ENCODE measurements at regions of chr4 and their contacts with region 1.

Region 1: GRCh38 chr4:58590722-58591121 is 1480.5 kb upstream of the IGFBP7 start:
- DNase-seq: peak; percentile 87
- H3K4me3 Mint-ChIP-seq: no peak overlapping the region
- H3K27ac Mint-ChIP-seq: no peak overlapping the region
- H3K4me1 Mint-ChIP-seq: peaks cover 8% of the 10 kb centered on the region
- H3K27me3 Mint-ChIP-seq: no peaks in the 10 kb centered on the region
- CTCF ChIP-seq: no peak

Region 2: DNA sequence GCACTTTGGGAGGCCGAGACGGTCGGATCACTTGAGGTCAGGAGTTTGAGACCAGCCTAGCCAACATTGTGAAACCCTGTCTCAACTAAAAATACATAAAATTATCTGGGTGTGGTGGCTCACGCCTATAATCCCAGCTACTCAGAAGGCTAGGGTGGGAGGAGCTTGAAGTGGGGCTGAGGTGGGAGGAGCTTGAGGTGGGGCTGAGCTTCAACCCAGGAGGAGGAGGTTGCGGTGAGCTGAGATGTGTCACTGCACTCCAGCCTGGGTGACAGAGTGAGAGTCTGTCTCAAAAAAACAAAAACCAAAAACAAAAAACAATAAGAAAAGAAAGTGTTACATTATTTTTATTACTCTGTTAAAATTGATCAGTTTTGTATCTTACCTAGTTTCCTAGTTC is 316.2 kb before region 1 on chr4:
- CTCF ChIA-PET with region 1: no interaction called
- POLR2A ChIA-PET with region 1: no interaction called
- intact Hi-C with region 1: loop called (anchors 10 kb)
- DNase-seq: no peak
- H3K4me3 Mint-ChIP-seq: no peak overlapping the region
- H3K27ac Mint-ChIP-seq: no peak overlapping the region
- H3K4me1 Mint-ChIP-seq: no peaks in the 10 kb centered on the region
- H3K27me3 Mint-ChIP-seq: no peaks in the 10 kb centered on the region
- CTCF ChIP-seq: no peak

Region 3: DNA sequence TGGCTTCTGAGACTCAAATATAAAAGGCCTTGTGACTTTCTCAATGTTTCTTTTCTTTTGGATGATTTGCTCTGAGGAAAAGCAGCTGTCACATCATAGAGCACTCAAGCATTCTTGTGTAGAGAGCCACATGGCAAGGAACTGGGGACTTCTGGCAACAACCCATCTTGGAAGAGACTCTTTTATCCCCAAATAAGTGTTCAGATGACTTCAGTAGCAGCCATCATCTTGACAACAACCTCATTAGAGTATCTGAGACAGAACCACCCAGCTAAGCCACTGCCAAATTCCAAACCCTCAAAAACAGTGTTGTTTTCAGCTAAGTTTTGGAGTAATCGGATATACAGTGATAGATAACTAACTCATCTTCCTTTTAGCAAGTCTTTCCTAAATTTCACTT is 48.8 kb before region 1 on chr4:
- CTCF ChIA-PET with region 1: no interaction called
- POLR2A ChIA-PET with region 1: no interaction called
- intact Hi-C with region 1: no loop called
- DNase-seq: no peak
- H3K4me3 Mint-ChIP-seq: no peak overlapping the region
- H3K27ac Mint-ChIP-seq: no peak overlapping the region
- H3K4me1 Mint-ChIP-seq: no peaks in the 10 kb centered on the region
- H3K27me3 Mint-ChIP-seq: no peaks in the 10 kb centered on the region
- CTCF ChIP-seq: no peak

Measured in MCF 10A (cell line).